Ascending aorta (tissue), 2 donors: ENCODE measurements at regions of chr1 and their contacts with region 1.

Region 1: DNA sequence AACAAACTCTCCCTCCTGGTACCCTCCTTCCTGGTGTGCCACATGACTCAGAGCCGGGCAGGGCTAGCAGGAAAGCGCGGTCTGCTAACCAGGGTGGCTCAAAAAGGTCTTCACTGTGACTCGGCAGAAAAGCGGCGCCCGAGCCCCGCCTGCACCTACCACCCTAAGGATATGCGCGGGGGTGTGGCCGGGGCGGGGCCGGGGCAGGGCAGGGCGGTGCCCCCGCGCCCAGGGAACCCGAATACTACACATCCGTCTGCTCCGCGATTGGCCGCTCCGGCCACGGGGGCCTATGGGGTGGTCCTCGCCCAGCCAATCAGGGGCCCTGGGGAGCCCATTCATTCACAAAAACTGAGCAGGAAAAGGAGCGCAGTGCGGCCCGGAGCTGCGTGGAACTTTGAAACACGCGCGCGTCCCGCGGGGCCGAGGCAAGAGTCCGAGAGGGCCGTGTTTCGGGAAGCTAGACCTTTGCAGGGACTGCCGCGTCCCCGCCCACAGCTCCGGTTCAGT is 1.7 kb downstream of the LRP8 start:
- DNase-seq: peak; percentile 80 to 96
- H3K4me3 ChIP-seq: peak overlapping the region; percentile 72 to 84
- H3K27ac ChIP-seq: peak overlapping the region; percentile 42 to 43
- H3K4me1 ChIP-seq: peaks cover 5 to 10% of the 10 kb centered on the region in 2 donors
- H3K27me3 ChIP-seq: no peaks in the 10 kb centered on the region
- CTCF ChIP-seq: no peak

Region 2: DNA sequence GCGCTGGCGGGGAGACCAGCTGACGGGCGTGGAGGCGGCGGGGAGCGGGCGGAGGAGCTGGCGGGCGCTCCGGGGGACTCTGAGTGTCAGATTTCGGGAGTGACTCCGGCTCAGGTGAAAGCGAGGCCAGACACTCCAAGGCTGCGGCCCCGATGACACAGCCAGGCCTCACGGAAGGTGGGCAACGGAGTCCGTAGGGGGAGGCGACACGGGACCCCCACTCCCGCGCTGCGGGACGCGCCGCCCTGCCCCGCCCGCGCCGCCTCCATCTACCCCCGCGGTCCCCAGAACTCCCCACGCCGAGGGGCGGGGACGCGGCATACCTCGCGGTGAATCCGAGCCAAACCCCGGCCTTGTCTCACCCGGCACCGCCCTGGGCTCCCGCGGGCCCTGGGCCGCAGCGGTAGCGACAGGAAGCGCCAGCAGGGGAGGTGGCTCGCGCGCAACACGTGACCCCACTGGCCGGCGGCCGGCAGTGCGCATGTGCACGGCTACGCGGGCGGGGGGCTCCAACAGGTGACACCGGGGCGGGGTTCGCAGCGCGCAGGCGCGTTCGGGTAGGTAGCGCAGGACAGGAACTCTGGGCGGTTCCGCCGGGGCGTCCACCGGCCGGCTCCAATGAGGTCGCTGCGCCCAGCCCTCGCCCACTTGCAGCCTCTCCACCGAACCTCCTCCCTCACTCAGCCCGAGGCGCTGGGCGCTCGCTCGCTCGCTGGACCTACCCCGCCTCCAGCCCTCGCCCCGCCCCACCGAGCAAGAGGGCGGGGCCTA is 960.2 kb before region 1 on chr1 and contains the start of gene CC2D1B:
- intact Hi-C with region 1: loop called (anchors 10 kb)
- DNase-seq: peak; percentile 96 to 99
- H3K4me3 ChIP-seq: peak within 1 kb of the TSS; percentile 90 to 94
- H3K27ac ChIP-seq: peak within 1 kb of the TSS; percentile 92 to 96
- H3K4me1 ChIP-seq: peaks cover 2 to 14% of the 10 kb centered on the region in 2 donors
- H3K27me3 ChIP-seq: no peaks in the 10 kb centered on the region
- CTCF ChIP-seq: peak in 1 of 3 experiments; percentile 34
- total RNA-seq, gene CC2D1B: 45.4 TPM

Region 3: GRCh38 chr1:52920791-52921291 is 405.3 kb before region 1 on chr1:
- intact Hi-C with region 1: loop called (anchors 5 kb)
- DNase-seq: no peak
- H3K4me3 ChIP-seq: peak overlapping the region; percentile 78 to 95
- H3K27ac ChIP-seq: peak overlapping the region; percentile 82 to 93
- H3K4me1 ChIP-seq: peaks cover 0 to 6% of the 10 kb centered on the region in 2 donors
- H3K27me3 ChIP-seq: no peaks in the 10 kb centered on the region
- CTCF ChIP-seq: no peak

Region 4: GRCh38 chr1:53220171-53220961 is 105.8 kb before region 1 on chr1 and contains the start of gene CZIB:
- intact Hi-C with region 1: loop called (anchors 1 kb)
- DNase-seq: peak; percentile 65 to 96
- H3K4me3 ChIP-seq: peak within 1 kb of the TSS; percentile 72 to 88
- H3K27ac ChIP-seq: peak within 1 kb of the TSS; percentile 91 to 98
- H3K4me1 ChIP-seq: peaks cover 3 to 12% of the 10 kb centered on the region in 2 donors
- H3K27me3 ChIP-seq: no peaks in the 10 kb centered on the region
- CTCF ChIP-seq: no peak
- total RNA-seq, gene CZIB: 28.9 TPM

Region 5: DNA sequence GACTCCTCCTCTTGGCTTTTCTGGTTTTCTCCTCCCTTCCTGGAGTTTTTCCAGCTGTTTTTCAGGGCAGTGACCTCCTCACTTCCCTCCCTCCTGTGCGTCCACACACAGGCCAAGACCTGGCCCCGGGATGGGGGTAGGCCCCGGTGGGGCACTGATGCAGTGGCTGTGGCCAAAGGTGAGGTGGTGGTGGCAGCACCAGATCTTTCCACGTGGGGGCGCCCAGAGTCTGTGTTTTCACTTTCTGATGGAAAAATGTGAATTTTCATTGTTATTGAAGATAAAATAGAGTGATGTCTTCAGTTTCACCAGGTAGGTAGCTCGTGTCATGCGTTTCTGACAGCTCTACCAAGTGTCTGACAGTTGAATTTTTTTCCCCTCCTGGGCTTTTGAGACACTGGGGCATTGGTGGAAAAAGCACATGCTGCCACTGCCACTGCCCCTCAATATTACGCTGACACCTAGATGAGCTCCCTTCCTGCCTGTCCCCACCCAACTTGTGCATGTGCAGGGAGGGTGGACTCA is 47.9 kb before region 1 on chr1:
- intact Hi-C with region 1: loop called (anchors 5 kb)
- DNase-seq: no peak
- H3K4me3 ChIP-seq: no peak overlapping the region
- H3K27ac ChIP-seq: no peak overlapping the region
- H3K4me1 ChIP-seq: no peaks in the 10 kb centered on the region
- H3K27me3 ChIP-seq: no peaks in the 10 kb centered on the region
- CTCF ChIP-seq: peak; percentile 89 to 95 (median 91)

Region 6: DNA sequence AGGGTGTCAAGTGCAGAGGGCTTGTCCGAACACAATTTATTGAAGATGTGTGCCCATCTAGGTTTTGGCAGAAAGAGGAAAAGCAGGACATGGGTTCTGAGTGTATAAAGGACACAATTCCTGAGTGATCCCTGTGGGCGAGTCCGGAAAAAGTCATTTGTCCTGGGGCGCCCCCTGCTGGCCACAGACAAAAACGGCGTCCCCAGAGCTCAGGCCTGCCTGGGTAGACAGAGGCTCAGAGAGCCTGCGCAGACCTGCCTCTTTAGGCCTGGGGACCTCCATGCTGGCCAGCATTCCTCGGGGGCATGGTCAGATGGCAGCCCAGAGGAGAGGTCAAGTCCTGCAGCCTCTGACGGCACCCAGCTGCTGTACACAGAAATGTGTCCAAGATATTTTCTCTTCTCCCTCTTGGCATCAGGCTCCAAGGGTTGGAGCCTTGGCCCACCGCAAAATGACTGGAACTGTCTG is 67.2 kb after region 1 on chr1:
- intact Hi-C with region 1: loop called (anchors 5 kb)
- DNase-seq: peak in 1 of 2 donors; percentile 83
- H3K4me3 ChIP-seq: no peak overlapping the region
- H3K27ac ChIP-seq: no peak overlapping the region
- H3K4me1 ChIP-seq: no peaks in the 10 kb centered on the region
- H3K27me3 ChIP-seq: no peaks in the 10 kb centered on the region
- CTCF ChIP-seq: peak; percentile 85 to 95 (median 86)